ENCODE measurements at regions of chr10 and their contacts with region 1.

Region 1: GRCh38 chr10:13056456-13057077 is 43.4 kb upstream of the OPTN start:
- DNase-seq: no peak

Region 2: DNA sequence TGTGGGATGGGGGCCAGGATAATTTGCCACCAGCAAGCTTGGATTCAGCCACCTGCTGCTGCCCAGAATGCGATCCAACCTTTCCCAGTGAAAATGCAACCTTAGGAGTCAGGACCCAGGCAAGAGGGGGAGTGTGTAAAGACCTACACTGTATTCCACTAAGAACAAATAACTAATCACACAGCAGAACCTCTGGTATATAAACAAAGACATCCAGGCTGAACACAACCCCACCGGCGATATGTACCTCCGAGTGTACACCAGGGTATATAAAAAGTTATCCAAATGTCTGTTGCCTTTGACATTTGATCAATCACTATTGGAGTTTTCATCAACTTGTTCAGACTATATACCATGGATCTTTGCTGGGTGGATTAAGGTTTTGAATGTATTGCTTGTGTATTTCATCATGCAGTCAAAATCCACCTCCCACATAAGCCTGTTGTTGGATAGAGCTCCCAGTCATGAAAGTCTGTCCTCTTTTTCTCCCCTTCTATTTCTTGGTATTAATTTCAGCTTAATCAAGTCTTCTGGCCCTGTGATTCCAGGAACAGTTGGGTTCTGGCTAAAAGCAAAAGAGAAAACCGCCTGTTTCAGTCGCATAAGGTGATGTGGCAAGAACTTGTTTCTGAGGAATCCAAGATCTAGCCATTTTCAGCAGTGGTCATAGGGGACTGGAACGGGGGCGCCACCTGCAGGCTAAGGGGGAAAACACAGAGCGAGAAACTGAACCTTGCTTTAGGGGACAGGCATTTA is 345.8 kb before region 1 on chr10:
- intact Hi-C with region 1: loop called in 1 of 2 experiments (anchors 5 kb)
- DNase-seq: peak; percentile 93

Region 3: GRCh38 chr10:13036841-13037240 is 19.7 kb before region 1 on chr10:
- intact Hi-C with region 1: no loop called
- DNase-seq: no peak